ENCODE measurements at regions of chr12 and their contacts with region 1.

Region 1: GRCh38 chr12:43805860-43806736 is at the start of gene TWF1:
- DNase-seq: peak; percentile 88 to 91
- ATAC-seq: peak; percentile 94 to 99 (median 96)
- H3K4me3 ChIP-seq: peak within 1 kb of the TSS; percentile 93
- H3K4me3 Mint-ChIP-seq: peak within 1 kb of the TSS; percentile 100
- H3K27ac ChIP-seq: peak within 1 kb of the TSS; percentile 97
- H3K27ac Mint-ChIP-seq: peak within 1 kb of the TSS; percentile 95 to 98
- H3K4me1 ChIP-seq: no peaks in the 10 kb centered on the region
- H3K4me1 Mint-ChIP-seq: peaks cover 28 to 29% of the 10 kb centered on the region in 2 donors
- H3K27me3 ChIP-seq: no peaks in the 10 kb centered on the region
- H3K27me3 Mint-ChIP-seq: peaks cover 1 to 10% of the 10 kb centered on the region in 2 donors
- CTCF ChIP-seq: no peak
- total RNA-seq, gene TWF1: 68.0 to 75.5 (median 68.1) TPM

Region 2: DNA sequence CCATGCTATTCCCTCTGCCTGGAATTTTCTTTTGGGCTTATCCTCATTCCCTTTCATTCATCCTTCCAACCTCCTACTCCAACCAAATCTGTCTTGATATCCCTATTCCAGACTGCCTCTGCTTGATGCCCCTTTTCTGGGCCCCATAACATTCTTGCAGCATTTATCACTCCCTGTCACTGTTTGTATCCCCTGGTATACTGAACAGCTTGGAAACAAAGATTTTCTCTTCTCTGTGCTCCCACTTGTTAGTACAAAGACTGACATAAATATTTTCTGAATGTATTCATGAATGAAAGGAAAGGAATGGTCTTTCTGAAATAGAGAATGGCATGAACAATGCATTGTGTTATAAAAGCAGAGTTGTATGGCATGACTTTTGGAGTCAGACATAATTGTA is 39.8 kb before region 1 on chr12:
- intact Hi-C with region 1: no loop called
- DNase-seq: no peak
- ATAC-seq: no peak
- H3K4me3 ChIP-seq: no peak overlapping the region
- H3K4me3 Mint-ChIP-seq: no peak overlapping the region
- H3K27ac ChIP-seq: no peak overlapping the region
- H3K27ac Mint-ChIP-seq: no peak overlapping the region
- H3K4me1 ChIP-seq: peaks cover 3% of the 10 kb centered on the region
- H3K4me1 Mint-ChIP-seq: peaks cover 34 to 39% of the 10 kb centered on the region in 2 donors
- H3K27me3 ChIP-seq: no peaks in the 10 kb centered on the region
- H3K27me3 Mint-ChIP-seq: no peaks in the 10 kb centered on the region
- CTCF ChIP-seq: no peak

Region 3: DNA sequence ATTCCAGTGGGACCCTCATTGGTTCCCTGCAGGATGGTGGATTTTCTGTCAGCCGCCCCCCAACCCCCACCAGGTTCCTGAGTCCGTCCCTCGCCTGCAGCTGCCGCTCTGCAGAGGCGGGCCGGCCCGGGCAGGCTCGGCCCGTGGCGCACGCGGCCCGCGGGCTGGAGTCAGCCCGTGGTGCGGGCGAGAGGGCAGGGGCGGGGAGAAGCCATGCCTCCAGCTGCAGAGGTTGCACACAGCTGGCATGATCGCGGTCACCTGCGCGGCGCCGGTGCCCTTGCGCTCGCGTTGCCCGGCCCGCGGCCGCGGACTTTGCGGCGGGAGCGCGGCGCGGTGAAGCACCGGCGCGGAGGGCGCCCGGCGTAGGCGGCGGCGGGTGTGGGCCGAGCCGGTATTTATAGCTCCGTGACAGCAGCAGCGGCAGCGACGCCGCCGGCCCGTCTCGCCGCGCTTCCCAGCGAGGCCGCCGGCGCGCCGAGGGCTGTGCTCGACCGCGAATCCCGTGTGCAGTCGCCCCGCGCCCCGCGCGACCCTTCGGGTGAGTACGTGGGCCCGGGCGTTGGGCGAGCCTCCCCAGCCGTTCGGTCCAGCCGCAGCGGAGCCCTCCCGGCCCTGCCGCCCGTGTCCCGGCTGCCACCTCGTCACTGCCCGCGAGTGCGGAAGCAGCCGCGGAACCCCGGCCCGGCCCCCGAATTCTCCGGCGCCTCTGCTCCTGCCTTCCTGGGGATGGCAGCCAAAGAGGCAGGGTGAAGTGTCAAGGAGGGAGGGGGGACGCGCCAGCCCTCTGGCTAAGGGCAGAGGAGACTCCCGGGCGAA is 29.8 kb after region 1 on chr12 and contains the start of gene TMEM117:
- intact Hi-C with region 1: loop called (anchors 2 kb)
- DNase-seq: peak; percentile 62 to 73
- ATAC-seq: peak; percentile 77 to 85 (median 80)
- H3K4me3 ChIP-seq: peak within 1 kb of the TSS; percentile 62
- H3K4me3 Mint-ChIP-seq: peak within 1 kb of the TSS; percentile 81
- H3K27ac ChIP-seq: peak within 1 kb of the TSS; percentile 67
- H3K27ac Mint-ChIP-seq: peak within 1 kb of the TSS; percentile 74 to 85
- H3K4me1 ChIP-seq: peaks cover 13% of the 10 kb centered on the region
- H3K4me1 Mint-ChIP-seq: peaks cover 32 to 36% of the 10 kb centered on the region in 2 donors
- H3K27me3 ChIP-seq: peaks cover 2% of the 10 kb centered on the region
- H3K27me3 Mint-ChIP-seq: no peaks in the 10 kb centered on the region
- CTCF ChIP-seq: no peak
- total RNA-seq, gene TMEM117: 7.1 to 8.1 (median 7.9) TPM

Region 4: GRCh38 chr12:43882578-43883178 is 76.6 kb after region 1 on chr12:
- intact Hi-C with region 1: loop called (anchors 5 kb)
- DNase-seq: peak in 1 of 2 donors; percentile 77
- ATAC-seq: peak; percentile 77 to 86 (median 86)
- H3K4me3 ChIP-seq: no peak overlapping the region
- H3K4me3 Mint-ChIP-seq: no peak overlapping the region
- H3K27ac ChIP-seq: no peak overlapping the region
- H3K27ac Mint-ChIP-seq: no peak overlapping the region
- H3K4me1 ChIP-seq: no peaks in the 10 kb centered on the region
- H3K4me1 Mint-ChIP-seq: no peaks in the 10 kb centered on the region
- H3K27me3 ChIP-seq: no peaks in the 10 kb centered on the region
- H3K27me3 Mint-ChIP-seq: no peaks in the 10 kb centered on the region
- CTCF ChIP-seq: peak; percentile 75